OCI-LY7 (cell line): ENCODE measurements at regions of chr11 and their contacts with region 1.

Region 1: GRCh38 chr11:85854557-85855340 is 434 bp upstream of the CCDC83 start:
- DNase-seq: peak; percentile 87
- H3K4me3 ChIP-seq: peak overlapping the region; percentile 65
- H3K27ac ChIP-seq: no peak overlapping the region
- H3K4me1 ChIP-seq: peaks cover 10% of the 10 kb centered on the region
- CTCF ChIP-seq: peak; percentile 74

Region 2: GRCh38 chr11:85772695-85773094 is 82.1 kb before region 1 on chr11:
- CTCF ChIA-PET with region 1: no interaction called
- POLR2A ChIA-PET with region 1: no interaction called
- intact Hi-C with region 1: no loop called
- DNase-seq: no peak
- H3K4me3 ChIP-seq: no peak overlapping the region
- H3K27ac ChIP-seq: no peak overlapping the region
- H3K4me1 ChIP-seq: no peaks in the 10 kb centered on the region
- CTCF ChIP-seq: no peak

Region 3: DNA sequence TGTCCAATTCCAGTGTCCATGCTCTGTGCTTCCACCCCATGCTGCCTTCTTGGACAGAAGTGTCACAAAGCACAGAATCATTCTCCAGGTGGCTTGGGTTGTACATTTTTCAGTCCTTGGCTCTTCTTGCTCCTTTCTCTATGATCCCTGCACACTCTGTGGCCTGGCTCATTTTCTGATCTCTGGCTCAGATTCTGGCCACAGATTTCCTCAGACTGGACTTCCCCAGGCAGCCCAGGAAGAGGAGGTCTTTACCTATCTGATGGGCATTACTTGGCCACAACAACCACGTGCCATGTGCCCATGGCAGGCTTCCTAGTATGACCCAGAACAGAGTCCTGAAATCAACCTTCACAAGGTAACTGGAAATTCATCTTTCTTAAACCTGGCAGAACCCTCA is 71.0 kb before region 1 on chr11:
- CTCF ChIA-PET with region 1: no interaction called
- POLR2A ChIA-PET with region 1: no interaction called
- intact Hi-C with region 1: no loop called
- DNase-seq: no peak
- H3K4me3 ChIP-seq: no peak overlapping the region
- H3K27ac ChIP-seq: no peak overlapping the region
- H3K4me1 ChIP-seq: no peaks in the 10 kb centered on the region
- CTCF ChIP-seq: no peak

Region 4: DNA sequence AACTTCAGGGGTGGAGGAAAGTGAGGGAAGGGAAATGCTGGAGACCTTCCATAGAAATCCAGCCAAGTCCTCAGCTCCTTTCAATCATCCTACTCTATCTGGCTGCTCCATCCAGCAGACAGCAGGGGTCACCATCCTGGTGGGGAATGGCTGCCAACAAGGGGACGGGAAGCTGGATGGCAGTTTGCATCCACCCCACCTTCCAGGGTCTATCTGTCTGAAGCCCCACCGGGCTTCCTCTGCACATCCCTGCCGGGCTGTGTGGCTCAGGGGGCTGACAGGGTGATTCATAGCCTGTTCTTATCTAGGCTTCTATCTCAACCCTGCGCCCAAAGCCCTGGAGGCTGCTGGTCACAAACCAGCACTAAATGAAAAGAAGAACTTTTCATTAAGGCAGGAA is 44.9 kb before region 1 on chr11:
- CTCF ChIA-PET with region 1: no interaction called
- POLR2A ChIA-PET with region 1: no interaction called
- intact Hi-C with region 1: loop called (anchors 1 kb)
- DNase-seq: peak; percentile 18
- H3K4me3 ChIP-seq: peak overlapping the region; percentile 62
- H3K27ac ChIP-seq: peak overlapping the region; percentile 38
- H3K4me1 ChIP-seq: peaks cover 32% of the 10 kb centered on the region
- CTCF ChIP-seq: peak; percentile 44; the same call in 1 of the 2 replicates

Region 5: DNA sequence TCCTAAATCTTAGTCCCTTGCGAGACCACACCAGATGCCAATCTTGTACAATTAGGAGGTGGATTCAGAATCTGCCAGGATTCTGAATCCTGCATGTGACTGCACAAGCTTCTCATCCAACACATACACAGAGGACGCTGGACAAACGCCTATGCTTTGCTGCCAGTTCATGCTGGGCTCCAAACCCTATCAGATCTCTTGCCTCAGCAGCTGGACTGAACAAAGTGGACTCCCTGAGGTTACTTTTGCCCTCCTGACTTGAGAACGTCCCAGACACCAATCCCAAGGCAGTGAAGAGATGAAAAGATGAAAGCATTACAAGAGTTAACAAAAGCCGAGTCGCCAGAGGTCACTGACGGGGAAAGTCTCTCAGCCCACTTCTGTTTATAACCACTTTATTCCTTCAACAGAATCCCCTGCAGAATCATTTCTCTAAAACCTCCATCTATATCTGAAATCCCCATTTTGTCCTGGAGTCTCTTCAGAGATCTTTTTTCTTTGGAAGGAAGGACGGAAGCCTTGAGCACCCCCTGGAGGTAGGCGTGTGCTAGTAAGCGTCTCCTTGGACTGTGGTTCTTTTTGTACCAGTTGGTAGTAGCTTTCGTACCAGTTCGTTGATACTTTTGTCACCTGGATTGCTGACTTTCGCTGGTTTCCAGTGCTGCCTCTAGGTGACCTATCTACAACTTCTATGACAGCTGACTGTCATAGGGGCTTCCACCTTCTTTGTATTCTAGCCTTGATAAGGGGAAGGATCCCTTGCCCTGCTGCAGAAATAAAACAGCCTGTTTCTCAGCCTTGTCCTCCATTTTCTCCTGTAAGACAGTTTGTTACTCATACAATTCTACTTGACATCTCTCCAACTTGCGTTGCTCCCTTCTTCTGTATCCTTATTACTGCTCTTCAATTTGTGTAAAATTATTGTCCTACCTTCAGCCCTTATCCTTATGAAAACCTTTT is 363.7 kb after region 1 on chr11:
- CTCF ChIA-PET with region 1: no interaction called
- POLR2A ChIA-PET with region 1: no interaction called
- intact Hi-C with region 1: loop called (anchors 5 kb)
- DNase-seq: peak; percentile 67
- H3K4me3 ChIP-seq: no peak overlapping the region
- H3K27ac ChIP-seq: no peak overlapping the region
- H3K4me1 ChIP-seq: peaks cover 9% of the 10 kb centered on the region
- CTCF ChIP-seq: peak; percentile 89

Region 6: DNA sequence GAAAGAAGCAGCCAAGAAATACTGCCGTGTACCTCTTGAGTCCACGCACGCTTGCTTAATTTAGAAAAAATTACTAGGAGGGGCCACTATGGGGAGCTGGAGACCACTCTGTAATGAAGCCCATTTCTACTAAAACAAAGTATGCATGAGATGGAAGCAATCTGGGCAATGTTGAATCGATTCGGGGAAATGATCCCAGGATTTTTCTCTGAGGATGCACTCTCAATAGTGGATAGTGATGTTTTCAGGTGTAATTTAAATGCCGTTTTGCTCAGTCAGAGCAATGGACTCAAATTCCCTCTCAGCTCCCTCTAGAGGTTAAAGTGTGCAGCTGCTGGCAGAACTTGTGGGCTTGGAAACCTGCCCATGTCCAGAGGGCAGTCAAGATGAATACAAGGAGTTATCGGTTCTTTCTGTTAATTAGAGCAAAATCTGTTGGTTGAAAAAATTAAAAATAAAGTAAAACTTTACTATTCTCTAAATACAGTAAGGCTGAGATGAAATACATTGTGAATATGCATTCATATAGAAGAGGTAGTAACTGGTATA is 753.6 kb after region 1 on chr11:
- CTCF ChIA-PET with region 1: interaction called, 3 read pairs
- POLR2A ChIA-PET with region 1: no interaction called
- intact Hi-C with region 1: loop called (anchors 10 kb)
- DNase-seq: peak; percentile 47
- H3K4me3 ChIP-seq: no peak overlapping the region
- H3K27ac ChIP-seq: no peak overlapping the region
- H3K4me1 ChIP-seq: no peaks in the 10 kb centered on the region
- CTCF ChIP-seq: peak; percentile 99